ENCODE measurements at regions of chr14 and their contacts with region 1.

Region 1: GRCh38 chr14:24215495-24216344 is at the start of gene MDP1:
- DNase-seq: peak; percentile 73 to 82
- H3K4me3 ChIP-seq: peak within 1 kb of the TSS; percentile 77 to 94 (median 84)
- H3K27ac ChIP-seq: peak within 1 kb of the TSS; percentile 72
- H3K4me1 ChIP-seq: peaks cover 0 to 5% (median 2%) of the 10 kb centered on the region in 4 experiments; a peak in 1 of 7 replicates
- H3K27me3 ChIP-seq: no peaks in the 10 kb centered on the region
- CTCF ChIP-seq: peak; percentile 77 to 95 (median 92)
- EP300 ChIP-seq: no peak
- POLR2A ChIP-seq: peak; percentile 87 to 95
- RAD21 ChIP-seq: peak; percentile 65 to 73
- total RNA-seq, gene MDP1: 14.3 and 17.7 TPM in 2 replicates

Region 2: DNA sequence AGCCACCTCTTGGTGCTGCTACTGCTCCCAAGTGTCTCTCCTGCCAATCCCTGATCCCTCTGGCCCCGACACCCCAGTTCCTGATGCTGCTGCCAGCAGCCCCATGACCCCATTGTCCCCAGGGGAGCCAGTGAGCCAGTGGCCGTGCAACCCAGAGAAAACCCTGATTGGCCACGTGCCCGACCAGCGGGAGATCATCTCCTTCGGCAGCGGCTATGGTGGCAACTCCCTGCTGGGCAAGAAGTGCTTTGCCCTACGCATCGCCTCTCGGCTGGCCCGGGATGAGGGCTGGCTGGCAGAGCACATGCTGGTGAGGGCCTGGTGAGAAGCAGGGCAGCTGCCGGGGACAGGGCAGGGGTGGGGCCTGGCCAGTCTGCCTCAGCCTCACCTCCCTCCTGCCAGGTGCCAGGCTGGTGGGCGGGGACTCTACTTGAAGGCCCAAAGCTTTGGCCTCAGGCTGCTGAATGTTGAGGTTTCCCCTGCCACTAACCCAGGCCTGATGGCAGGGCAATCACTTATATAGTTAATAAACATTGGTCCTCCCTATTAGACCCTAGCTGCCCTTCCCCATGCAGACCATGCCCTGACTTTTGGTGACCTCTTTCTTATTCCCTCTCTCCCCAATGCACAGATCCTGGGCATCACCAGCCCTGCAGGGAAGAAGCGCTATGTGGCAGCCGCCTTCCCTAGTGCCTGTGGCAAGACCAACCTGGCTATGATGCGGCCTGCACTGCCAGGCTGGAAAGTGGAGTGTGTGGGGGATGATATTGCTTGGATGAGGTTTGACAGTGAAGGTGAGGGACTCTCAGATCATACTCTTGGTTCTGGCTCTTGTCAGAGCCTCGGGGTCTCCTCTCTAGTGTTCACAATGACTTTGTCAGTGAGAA is 116.5 kb before region 1 on chr14:
- CTCF ChIA-PET with region 1: no interaction called
- POLR2A ChIA-PET with region 1: no interaction called
- DNase-seq: no peak
- H3K4me3 ChIP-seq: no peak overlapping the region
- H3K27ac ChIP-seq: no peak overlapping the region
- H3K4me1 ChIP-seq: peaks cover 0 to 9% (median 6%) of the 10 kb centered on the region in 4 experiments; a peak in 6 of 7 replicates
- H3K27me3 ChIP-seq: no peaks in the 10 kb centered on the region
- CTCF ChIP-seq: no peak
- EP300 ChIP-seq: no peak
- POLR2A ChIP-seq: no peak
- RAD21 ChIP-seq: no peak

Region 3: GRCh38 chr14:24146978-24147760 is 68.6 kb before region 1 on chr14 and contains the start of gene RNF31:
- CTCF ChIA-PET with region 1: interaction called, 3 read pairs
- POLR2A ChIA-PET with region 1: interaction called, 13 read pairs
- DNase-seq: peak; percentile 93 to 96
- H3K4me3 ChIP-seq: peak within 1 kb of the TSS; percentile 92 to 98 (median 96)
- H3K27ac ChIP-seq: peak within 1 kb of the TSS; percentile 45; the same call in 1 of the 2 replicates
- H3K4me1 ChIP-seq: peaks cover 0 to 10% (median 7%) of the 10 kb centered on the region in 4 experiments; a peak in 5 of 7 replicates
- H3K27me3 ChIP-seq: no peaks in the 10 kb centered on the region
- CTCF ChIP-seq: no peak
- EP300 ChIP-seq: no peak
- POLR2A ChIP-seq: peak in 1 of 2 experiments; percentile 55; a peak in 1 of 3 replicates
- RAD21 ChIP-seq: no peak
- total RNA-seq, gene RNF31: 57.8 and 72.0 TPM in 2 replicates

Region 4: DNA sequence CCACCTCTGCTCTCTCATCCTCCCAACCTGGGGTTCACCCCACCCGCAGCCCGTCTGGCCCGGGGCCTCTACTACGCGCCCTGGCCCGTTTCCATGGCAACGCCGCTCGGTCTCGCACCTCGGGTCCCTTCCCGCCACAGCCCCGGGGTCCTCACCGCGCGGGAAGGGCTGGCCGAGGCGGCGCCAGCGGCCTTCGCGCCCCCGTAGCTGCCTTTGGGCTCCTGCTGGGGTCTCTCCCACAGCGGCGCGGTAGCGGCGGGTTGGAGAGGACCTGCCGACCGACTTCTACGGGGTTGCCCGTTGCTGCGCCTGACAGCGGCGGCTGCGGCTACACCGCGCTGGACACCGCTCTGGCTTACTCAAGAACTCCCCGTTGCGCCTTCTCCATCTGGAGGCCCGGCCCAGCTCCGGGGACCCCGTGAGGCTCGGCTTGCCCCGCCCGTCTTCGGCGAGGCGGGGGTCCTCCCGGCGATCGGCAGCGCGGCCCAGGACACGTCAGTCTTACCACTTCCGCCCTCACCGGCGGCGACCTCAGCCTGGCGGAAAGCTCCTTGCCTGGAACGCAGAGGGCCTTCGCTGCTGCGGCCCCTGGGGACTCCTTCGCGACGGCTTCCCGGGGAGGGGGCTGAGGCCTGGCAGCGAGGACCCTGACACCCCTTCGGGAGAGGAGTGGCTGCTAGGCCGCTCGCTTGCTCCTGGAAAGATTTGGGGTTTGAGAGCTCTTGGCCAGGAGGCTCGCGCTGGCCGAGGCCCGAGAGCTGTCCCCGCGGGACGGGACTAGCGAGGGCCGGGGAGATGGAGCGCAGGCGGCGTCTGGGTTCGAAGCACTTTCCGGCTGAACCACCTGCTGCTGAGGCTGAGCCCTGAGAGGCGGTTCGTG is 20.3 kb before region 1 on chr14 and contains the start of gene TM9SF1:
- CTCF ChIA-PET with region 1: interaction called, 7 read pairs
- POLR2A ChIA-PET with region 1: interaction called, 119 read pairs
- DNase-seq: peak; percentile 83 to 93
- H3K4me3 ChIP-seq: peak within 1 kb of the TSS; percentile 65 to 88 (median 84)
- H3K27ac ChIP-seq: peak within 1 kb of the TSS; percentile 95
- H3K4me1 ChIP-seq: peaks cover 0 to 9% (median 3%) of the 10 kb centered on the region in 4 experiments; a peak in 3 of 7 replicates
- H3K27me3 ChIP-seq: no peaks in the 10 kb centered on the region
- CTCF ChIP-seq: peak in 1 of 3 experiments; percentile 8; a peak in 1 of 4 replicates
- EP300 ChIP-seq: no peak
- POLR2A ChIP-seq: peak; percentile 7 to 61; a peak in 2 of 3 replicates
- RAD21 ChIP-seq: no peak
- total RNA-seq, gene TM9SF1: 22.2 and 25.3 TPM in 2 replicates

Region 5: GRCh38 chr14:24241829-24242443 is 26.2 kb after region 1 on chr14:
- CTCF ChIA-PET with region 1: interaction called, 7 read pairs
- POLR2A ChIA-PET with region 1: interaction called, 19 read pairs
- DNase-seq: peak; percentile 59 to 94
- H3K4me3 ChIP-seq: peak overlapping the region; percentile 80 to 97 (median 92)
- H3K27ac ChIP-seq: peak overlapping the region; percentile 84
- H3K4me1 ChIP-seq: peaks cover 0 to 5% (median 2%) of the 10 kb centered on the region in 4 experiments; a peak in 4 of 7 replicates
- H3K27me3 ChIP-seq: no peaks in the 10 kb centered on the region
- CTCF ChIP-seq: peak; percentile 34 to 54 (median 35); a peak in 3 of 4 replicates
- EP300 ChIP-seq: no peak
- POLR2A ChIP-seq: no peak
- RAD21 ChIP-seq: no peak

Region 6: DNA sequence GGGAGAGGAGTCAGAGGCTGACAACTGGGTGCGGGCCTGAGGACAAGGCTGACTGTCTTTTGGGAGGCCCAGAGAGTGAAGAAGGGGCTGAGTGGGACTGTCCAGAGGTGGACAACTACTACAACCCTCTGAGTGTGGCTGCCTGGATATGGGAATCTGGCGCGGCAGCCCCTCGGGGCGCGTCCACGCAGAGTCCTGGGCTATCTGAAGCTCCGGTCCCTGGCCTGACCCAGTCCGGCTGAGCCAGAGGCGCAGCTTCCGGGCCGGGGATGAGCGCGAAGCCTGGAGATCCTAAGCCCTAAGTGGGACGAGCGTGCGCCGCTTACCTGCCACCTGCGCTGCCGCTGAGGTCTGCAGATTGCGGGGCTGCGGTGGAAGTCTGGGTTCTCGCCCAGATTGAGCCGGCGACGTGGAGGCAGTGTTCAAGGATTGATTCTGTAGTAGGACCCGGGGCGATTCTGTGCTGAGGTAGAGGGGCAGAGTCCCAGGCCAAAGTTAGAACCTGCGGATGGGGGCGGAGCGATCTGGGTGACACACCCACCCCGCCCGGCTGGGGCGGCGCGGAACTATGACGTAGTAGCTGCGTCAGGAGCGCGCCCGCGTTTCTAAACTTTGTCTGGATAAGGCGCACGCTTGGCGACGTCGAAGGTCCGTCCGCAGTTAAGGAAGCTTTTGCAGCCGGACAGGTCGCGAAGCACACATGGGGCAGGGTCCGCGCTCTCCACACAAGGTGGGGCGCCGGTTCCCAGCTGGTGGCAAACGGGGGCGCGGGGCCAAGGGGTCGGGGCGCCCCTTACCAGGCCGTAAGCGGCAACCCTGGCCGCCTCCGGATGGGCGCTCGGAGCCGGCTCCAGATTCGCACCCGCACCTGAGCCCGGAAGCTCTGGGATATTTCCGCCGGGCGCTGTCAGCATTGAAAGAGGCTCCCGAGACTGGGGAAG is 83.8 kb after region 1 on chr14 and contains the starts of genes DHRS1 and NOP9:
- CTCF ChIA-PET with region 1: interaction called, 16 read pairs
- POLR2A ChIA-PET with region 1: interaction called, 7 read pairs
- DNase-seq: peak; percentile 61 to 99
- H3K4me3 ChIP-seq: peak within 1 kb of the TSS; percentile 76 to 91 (median 88)
- H3K27ac ChIP-seq: no peak within 1 kb of the TSS
- H3K4me1 ChIP-seq: peaks cover 0 to 7% (median 4%) of the 10 kb centered on the region in 4 experiments; a peak in 5 of 7 replicates
- H3K27me3 ChIP-seq: no peaks in the 10 kb centered on the region
- CTCF ChIP-seq: no peak
- EP300 ChIP-seq: peak in 1 of 2 experiments; percentile 10; a peak in 1 of 3 replicates
- POLR2A ChIP-seq: peak; percentile 81 to 88
- RAD21 ChIP-seq: no peak
- total RNA-seq, gene DHRS1: 8.8 and 13.4 TPM in 2 replicates
- total RNA-seq, gene NOP9: 34.8 and 39.3 TPM in 2 replicates

Measured in H1 (cell line).